Activated T-helper 1 cell treated with anti-CD3 and anti-CD28 coated beads, Interleukin-12 subunit alpha, Interleukin-12 subunit beta, Interleukin-2, Interleukin-4 antibody, amounts not matched to agents 30 ng/mL and 10 ng/mL and 1 ng/mL, durations not matched to agents 14 hours and 24 hours and 36 hours (primary cell): ENCODE measurements at regions of chr1 and their contacts with region 1.

Region 1: GRCh38 chr1:92485381-92486257 is 1.1 kb downstream of the GFI1 start:
- DNase-seq: peak; percentile 81
- H3K4me3 Mint-ChIP-seq: peak overlapping the region; percentile 99
- H3K27ac Mint-ChIP-seq: peak overlapping the region; percentile 98
- H3K4me1 Mint-ChIP-seq: peaks cover 41% of the 10 kb centered on the region
- H3K27me3 Mint-ChIP-seq: peaks cover 3% of the 10 kb centered on the region

Region 2: DNA sequence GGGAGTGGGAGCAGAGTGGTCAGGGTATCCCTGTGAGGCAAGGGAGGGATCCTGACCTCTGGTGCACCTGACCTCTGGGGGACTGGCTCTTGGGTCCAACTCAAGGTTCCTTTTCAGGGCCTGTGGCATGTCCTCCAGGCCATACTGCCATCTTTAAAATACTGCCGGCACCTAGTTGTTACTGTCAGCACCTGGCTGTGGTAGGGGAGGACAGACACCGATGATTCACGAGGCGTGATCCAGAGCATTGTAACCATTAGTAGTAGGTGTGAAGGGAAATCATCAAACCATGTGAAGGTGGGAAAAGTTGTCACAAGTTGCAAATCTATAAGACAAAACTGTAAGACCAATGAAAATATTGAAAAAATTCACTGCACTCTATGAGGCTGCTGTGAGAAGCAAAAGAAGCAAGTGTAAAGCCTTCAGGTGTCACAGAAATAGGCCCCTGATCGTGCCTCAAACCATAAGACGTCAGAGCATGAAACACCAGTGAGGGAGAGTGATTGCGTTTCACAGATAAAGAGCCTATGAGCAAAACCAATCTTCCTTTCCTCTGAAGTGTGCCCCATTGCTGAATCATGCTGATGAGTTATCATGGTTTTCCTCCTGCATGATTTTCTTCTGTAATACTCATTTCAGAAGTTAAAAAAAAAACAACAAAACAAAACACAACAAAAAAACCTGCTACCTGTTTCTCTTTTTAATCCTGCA is 929.6 kb before region 1 on chr1:
- intact Hi-C with region 1: loop called (anchors 10 kb)
- DNase-seq: peak; percentile 79
- H3K4me3 Mint-ChIP-seq: peak overlapping the region; percentile 67
- H3K27ac Mint-ChIP-seq: peak overlapping the region; percentile 83
- H3K4me1 Mint-ChIP-seq: peaks cover 90% of the 10 kb centered on the region
- H3K27me3 Mint-ChIP-seq: no peaks in the 10 kb centered on the region

Region 3: GRCh38 chr1:92211166-92211565 is 274.5 kb before region 1 on chr1:
- intact Hi-C with region 1: no loop called
- DNase-seq: no peak
- H3K4me3 Mint-ChIP-seq: no peak overlapping the region
- H3K27ac Mint-ChIP-seq: no peak overlapping the region
- H3K4me1 Mint-ChIP-seq: no peaks in the 10 kb centered on the region
- H3K27me3 Mint-ChIP-seq: peaks cover 6% of the 10 kb centered on the region

Region 4: GRCh38 chr1:92310185-92310597 is 175.4 kb before region 1 on chr1:
- intact Hi-C with region 1: loop called (anchors 2 kb)
- DNase-seq: no peak
- H3K4me3 Mint-ChIP-seq: no peak overlapping the region
- H3K27ac Mint-ChIP-seq: no peak overlapping the region
- H3K4me1 Mint-ChIP-seq: peaks cover 42% of the 10 kb centered on the region
- H3K27me3 Mint-ChIP-seq: no peaks in the 10 kb centered on the region

Region 5: GRCh38 chr1:92536980-92537884 is 51.6 kb after region 1 on chr1:
- intact Hi-C with region 1: loop called (anchors 1 kb)
- DNase-seq: peak; percentile 51
- H3K4me3 Mint-ChIP-seq: peak overlapping the region; percentile 60
- H3K27ac Mint-ChIP-seq: peak overlapping the region; percentile 92
- H3K4me1 Mint-ChIP-seq: peaks cover 86% of the 10 kb centered on the region
- H3K27me3 Mint-ChIP-seq: no peaks in the 10 kb centered on the region

Region 6: DNA sequence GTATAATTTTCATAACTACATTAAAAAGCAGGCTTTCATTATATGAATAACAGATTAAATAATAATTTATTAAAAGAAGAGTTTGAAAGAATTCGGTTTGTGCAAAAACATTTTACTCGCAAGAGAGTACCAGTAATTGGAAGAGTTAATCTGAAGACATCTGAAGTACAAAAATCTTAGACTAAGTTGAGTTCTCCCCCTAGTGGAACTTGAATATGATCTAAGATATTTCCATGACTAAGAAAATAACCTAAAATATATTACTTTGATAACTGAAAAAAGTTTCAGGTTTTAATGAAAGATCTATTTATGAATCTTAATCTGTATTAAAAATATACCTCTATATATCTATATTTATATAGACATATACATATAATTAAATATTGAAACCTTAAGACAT is 113.6 kb after region 1 on chr1:
- intact Hi-C with region 1: loop called (anchors 1 kb)
- DNase-seq: no peak
- H3K4me3 Mint-ChIP-seq: no peak overlapping the region
- H3K27ac Mint-ChIP-seq: no peak overlapping the region
- H3K4me1 Mint-ChIP-seq: peaks cover 27% of the 10 kb centered on the region
- H3K27me3 Mint-ChIP-seq: no peaks in the 10 kb centered on the region

Region 7: GRCh38 chr1:92975551-92976232 is 490.1 kb after region 1 on chr1:
- intact Hi-C with region 1: loop called (anchors 5 kb)
- DNase-seq: no peak
- H3K4me3 Mint-ChIP-seq: peak overlapping the region; percentile 3
- H3K27ac Mint-ChIP-seq: peak overlapping the region; percentile 70
- H3K4me1 Mint-ChIP-seq: peaks cover 80% of the 10 kb centered on the region
- H3K27me3 Mint-ChIP-seq: no peaks in the 10 kb centered on the region

Region 8: DNA sequence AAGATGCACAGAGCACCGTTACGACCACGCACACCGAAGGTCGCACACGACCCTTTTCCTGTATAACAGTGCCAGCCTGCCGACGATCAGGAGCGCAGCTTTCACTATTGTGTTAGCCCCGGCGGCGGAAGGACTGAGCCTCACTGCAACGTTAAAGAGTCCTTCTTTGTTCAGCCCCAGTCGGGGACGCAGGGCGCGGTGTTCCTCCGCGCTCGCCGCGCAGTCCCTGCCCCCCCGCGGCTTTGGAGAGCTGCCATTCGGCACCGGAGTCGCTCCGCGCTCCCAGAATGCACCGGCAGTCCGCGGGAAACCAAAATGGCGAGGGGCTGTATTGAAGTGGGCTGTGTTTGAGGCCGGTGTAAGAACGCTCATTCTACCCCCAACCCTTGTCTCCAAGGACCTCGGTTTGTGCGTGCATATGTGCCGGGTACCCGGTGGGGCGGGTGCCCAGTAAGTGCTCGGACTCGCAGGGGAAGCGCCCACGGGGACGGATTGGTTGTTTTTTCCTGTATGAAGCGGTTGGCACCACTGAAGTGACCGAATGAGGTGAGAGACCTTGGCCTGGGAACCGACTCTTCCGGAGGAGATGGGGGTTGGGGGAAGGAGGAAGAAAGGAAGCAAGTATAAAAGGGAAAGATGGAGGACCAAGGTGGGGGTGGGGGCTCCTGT is 593.5 kb after region 1 on chr1 and contains the start of gene MTF2:
- intact Hi-C with region 1: no loop called
- DNase-seq: peak; percentile 93
- H3K4me3 Mint-ChIP-seq: peak within 1 kb of the TSS; percentile 98
- H3K27ac Mint-ChIP-seq: peak within 1 kb of the TSS; percentile 95
- H3K4me1 Mint-ChIP-seq: peaks cover 58% of the 10 kb centered on the region
- H3K27me3 Mint-ChIP-seq: no peaks in the 10 kb centered on the region
- total RNA-seq, gene MTF2: 68.4 and 71.0 TPM in 2 replicates